Activated naive CD4-positive, alpha-beta T cell treated with anti-CD3 and anti-CD28 coated beads for 36 hours (primary cell): ENCODE measurements at regions of chr15 and their contacts with region 1.

Region 1: DNA sequence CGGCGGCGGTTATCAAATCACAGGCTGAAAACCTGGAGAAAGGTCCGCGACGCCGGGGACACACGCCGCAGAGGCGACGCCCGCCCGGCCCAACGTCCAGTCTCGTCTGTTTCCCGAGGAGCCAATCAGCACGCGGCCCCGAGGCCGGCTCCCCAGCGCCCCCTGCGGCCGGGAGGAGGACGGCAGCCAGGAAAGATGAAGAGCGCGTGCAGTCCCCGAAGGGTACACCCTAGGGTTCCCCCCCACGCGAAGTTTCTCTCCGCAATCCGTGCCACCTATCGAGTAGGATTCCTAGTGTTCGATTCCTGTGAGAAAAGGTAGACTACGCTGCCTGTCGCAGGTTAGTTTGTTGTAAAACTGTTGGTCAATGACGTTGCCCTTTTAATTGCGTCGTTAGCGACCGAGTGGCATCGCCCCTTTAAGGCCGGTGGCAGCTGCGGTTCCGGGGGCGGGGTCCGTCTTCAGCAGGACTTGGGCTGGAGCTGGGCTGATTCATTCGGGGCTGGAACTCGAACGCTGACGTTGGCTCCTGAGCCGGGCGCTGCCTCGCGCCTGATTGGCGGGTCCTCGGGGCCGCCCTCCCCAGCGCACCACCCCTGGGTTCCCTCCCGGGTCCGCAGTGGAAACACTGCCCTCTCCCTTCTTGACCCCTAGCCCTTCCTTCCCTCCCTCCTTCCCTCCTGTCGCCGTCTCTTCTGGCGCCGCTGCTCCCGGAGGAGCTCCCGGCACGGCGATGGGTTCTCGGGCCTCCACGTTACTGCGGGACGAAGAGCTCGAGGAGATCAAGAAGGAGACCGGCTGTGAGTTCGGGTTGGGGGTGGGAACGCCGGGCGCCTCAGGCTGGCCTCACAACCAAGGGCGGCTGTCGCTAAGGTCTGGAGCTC is at the starts of genes CHP1 and EXD1:
- DNase-seq: peak; percentile 98
- H3K4me3 Mint-ChIP-seq: peak within 1 kb of the TSS; percentile 88
- H3K27ac Mint-ChIP-seq: peak within 1 kb of the TSS; percentile 87
- H3K4me1 Mint-ChIP-seq: peaks cover 22% of the 10 kb centered on the region
- H3K27me3 Mint-ChIP-seq: no peaks in the 10 kb centered on the region
- total RNA-seq, gene CHP1: 37.7 to 39.8 TPM
- total RNA-seq, gene EXD1: not detected

Region 2: DNA sequence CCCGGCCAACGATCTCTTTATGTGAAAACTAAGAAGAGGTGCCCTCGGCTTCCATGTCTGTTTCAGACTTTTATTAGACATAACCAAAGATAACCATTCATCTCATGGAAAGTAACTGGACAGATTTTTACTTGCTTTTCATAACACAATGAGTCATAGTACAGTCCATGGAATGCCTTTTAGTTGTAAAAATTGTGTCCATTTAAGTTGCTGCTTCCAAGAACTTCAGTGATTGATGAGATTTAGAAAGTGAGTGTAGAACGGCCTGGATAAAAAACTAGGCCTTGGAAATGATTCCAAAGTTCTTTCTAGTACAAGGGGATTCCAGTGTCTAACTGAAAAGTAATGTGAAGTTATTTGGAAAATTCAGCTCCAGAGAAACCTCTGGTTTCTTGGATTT is 1286.2 kb before region 1 on chr15:
- CTCF ChIA-PET with region 1: no interaction called
- intact Hi-C with region 1: no loop called
- DNase-seq: no peak
- H3K4me3 Mint-ChIP-seq: no peak overlapping the region
- H3K27ac Mint-ChIP-seq: no peak overlapping the region
- H3K4me1 Mint-ChIP-seq: peaks cover 3% of the 10 kb centered on the region
- H3K27me3 Mint-ChIP-seq: no peaks in the 10 kb centered on the region

Region 3: GRCh38 chr15:40952901-40953712 is 277.8 kb before region 1 on chr15 and contains the start of gene CHAC1:
- CTCF ChIA-PET with region 1: no interaction called
- intact Hi-C with region 1: loop called (anchors 1 kb)
- DNase-seq: peak; percentile 99
- H3K4me3 Mint-ChIP-seq: peak within 1 kb of the TSS; percentile 94
- H3K27ac Mint-ChIP-seq: peak within 1 kb of the TSS; percentile 93
- H3K4me1 Mint-ChIP-seq: peaks cover 35% of the 10 kb centered on the region
- H3K27me3 Mint-ChIP-seq: no peaks in the 10 kb centered on the region
- total RNA-seq, gene CHAC1: 19.8 to 20.2 TPM

Region 4: DNA sequence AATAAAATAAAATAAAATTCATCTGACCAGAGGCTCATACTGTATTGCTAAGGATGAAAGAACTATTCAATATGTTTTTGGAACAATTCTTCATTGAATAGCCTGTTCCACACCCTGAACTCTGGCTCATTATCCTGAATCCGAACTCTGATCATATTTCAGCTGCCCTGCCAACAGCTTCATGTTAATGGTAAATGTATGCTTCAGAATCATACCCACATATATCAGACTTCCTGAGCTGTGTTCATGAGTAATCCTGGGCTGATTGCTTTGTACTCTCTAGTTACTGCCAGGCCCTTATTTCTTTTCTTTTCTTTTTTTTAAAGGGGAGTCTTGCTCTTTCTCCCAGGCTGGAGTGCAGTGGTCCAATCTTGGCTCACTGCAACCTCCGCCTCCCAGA is 126.7 kb before region 1 on chr15:
- CTCF ChIA-PET with region 1: no interaction called
- intact Hi-C with region 1: no loop called
- DNase-seq: no peak
- H3K4me3 Mint-ChIP-seq: no peak overlapping the region
- H3K27ac Mint-ChIP-seq: no peak overlapping the region
- H3K4me1 Mint-ChIP-seq: peaks cover 19% of the 10 kb centered on the region
- H3K27me3 Mint-ChIP-seq: no peaks in the 10 kb centered on the region

Region 5: GRCh38 chr15:41218851-41219250 is 12.0 kb before region 1 on chr15:
- CTCF ChIA-PET with region 1: no interaction called
- intact Hi-C with region 1: no loop called
- DNase-seq: no peak
- H3K4me3 Mint-ChIP-seq: no peak overlapping the region
- H3K27ac Mint-ChIP-seq: no peak overlapping the region
- H3K4me1 Mint-ChIP-seq: no peaks in the 10 kb centered on the region
- H3K27me3 Mint-ChIP-seq: peaks cover 2% of the 10 kb centered on the region

Region 6: DNA sequence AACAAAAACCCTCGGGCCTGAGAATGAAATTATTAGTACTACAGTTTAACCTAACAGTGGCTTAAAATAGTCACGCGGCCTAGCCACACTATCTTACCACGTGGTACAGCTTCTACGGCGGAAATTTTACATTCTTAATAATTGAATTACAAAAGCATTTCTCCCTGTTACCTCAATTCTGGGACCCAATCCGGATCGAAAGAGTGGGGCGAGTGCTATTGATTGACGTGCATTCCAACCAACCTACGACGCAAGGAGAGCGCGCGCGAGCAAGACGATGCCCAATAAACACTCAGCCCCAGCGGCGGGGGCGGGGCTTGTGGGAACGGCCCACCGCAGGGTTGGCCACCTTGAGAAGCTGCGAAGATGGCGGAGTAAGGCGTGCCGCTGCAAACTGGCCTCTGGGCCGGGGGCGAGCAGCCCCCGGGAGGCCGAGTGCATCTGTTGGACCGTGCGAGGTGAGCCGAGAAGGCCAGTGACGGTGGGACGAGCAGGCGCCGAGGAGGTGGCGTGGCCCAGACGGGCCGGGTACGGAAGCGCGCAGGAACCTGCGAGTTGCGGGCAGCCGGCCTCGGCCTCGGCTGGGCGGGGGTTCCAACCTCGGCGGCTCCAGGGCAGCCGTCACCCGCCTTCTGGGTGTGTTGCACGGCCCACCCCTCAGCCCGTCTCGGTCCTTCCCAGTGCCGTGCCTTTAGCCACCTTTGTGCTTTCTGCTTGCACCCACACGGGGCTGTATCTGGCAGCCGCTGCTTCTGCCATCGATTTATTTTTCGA is 52.9 kb after region 1 on chr15:
- CTCF ChIA-PET with region 1: interaction called, 5 read pairs
- intact Hi-C with region 1: loop called (anchors 1 kb)
- DNase-seq: peak; percentile 99
- H3K4me3 Mint-ChIP-seq: peak overlapping the region; percentile 99
- H3K27ac Mint-ChIP-seq: peak overlapping the region; percentile 97
- H3K4me1 Mint-ChIP-seq: peaks cover 45% of the 10 kb centered on the region
- H3K27me3 Mint-ChIP-seq: no peaks in the 10 kb centered on the region

Region 7: GRCh38 chr15:41340188-41340695 is 109.3 kb after region 1 on chr15:
- CTCF ChIA-PET with region 1: no interaction called
- intact Hi-C with region 1: no loop called
- DNase-seq: no peak
- H3K4me3 Mint-ChIP-seq: no peak overlapping the region
- H3K27ac Mint-ChIP-seq: no peak overlapping the region
- H3K4me1 Mint-ChIP-seq: peaks cover 15% of the 10 kb centered on the region
- H3K27me3 Mint-ChIP-seq: no peaks in the 10 kb centered on the region

Region 8: DNA sequence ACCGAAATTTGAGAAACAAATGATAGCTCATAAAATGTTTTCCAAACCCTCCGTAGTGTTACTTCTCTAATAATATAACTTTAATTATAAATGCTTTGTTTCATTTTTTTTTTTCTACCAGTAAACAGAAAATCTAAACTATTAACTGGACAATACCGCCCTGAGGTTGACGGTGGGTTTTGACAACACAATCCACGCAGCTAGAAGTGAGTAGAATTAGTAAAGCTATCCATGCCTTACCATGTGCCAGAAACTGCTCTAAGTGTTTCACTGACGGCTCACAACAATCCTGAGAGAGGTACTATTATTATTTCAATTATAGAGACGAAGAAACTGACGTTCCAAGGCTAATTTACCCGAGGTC is 171.0 kb after region 1 on chr15:
- CTCF ChIA-PET with region 1: no interaction called
- intact Hi-C with region 1: loop called (anchors 5 kb)
- DNase-seq: no peak
- H3K4me3 Mint-ChIP-seq: peak overlapping the region; percentile 89
- H3K27ac Mint-ChIP-seq: peak overlapping the region; percentile 87
- H3K4me1 Mint-ChIP-seq: peaks cover 17% of the 10 kb centered on the region
- H3K27me3 Mint-ChIP-seq: no peaks in the 10 kb centered on the region

Region 9: DNA sequence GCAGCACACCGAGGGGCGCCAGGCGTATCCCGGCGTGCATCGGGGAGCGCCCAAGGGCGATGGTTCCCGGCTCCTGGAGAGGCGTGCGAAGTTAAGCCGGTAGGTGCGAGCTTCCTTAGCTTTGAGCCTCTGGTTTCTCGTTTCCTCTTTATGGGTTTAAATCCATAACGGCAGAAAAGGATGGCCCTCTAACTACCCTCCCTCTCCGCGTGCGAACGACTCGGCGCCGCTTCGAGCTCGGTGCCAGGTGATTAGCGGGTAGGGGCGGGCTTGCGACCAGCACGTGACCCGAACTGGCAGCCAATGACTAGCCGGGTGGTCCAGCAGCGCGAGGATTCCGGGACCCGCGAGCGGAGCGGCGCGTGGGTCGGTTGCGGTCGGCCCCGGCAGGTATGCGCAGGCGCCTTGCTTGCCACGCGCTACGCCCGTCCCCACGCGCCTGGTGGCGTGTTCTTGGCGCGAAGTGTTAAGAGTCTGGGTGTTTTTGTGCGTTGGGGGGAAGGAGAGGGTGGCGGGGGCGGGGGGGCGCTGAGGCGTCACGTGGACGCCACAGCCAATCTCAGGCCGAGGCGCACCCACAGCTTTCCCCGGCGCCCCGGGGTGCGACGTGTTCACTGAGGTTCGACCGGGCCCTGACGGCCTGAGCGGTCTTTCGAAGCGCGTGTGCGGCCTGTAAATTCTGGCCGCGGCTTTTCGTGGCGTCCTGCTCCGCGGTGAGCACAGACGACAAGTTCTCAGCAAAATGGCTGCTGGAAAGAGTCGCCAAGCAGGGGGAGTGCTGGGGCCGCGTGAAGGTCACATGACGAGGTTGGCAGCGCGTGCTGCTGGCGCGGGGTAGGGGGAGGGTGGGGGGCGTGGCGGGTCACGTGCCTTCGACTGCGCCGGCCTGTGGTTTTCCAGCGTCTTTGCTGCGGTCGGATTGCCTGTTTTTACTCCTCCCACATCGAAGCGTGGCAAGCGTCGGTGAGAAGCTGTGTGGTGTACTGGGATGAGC is 390.6 kb after region 1 on chr15:
- CTCF ChIA-PET with region 1: no interaction called
- intact Hi-C with region 1: loop called (anchors 2 kb)
- DNase-seq: peak; percentile 84
- H3K4me3 Mint-ChIP-seq: peak overlapping the region; percentile 73
- H3K27ac Mint-ChIP-seq: no peak overlapping the region
- H3K4me1 Mint-ChIP-seq: peaks cover 9% of the 10 kb centered on the region
- H3K27me3 Mint-ChIP-seq: no peaks in the 10 kb centered on the region